AG04450 (cell line): ENCODE measurements at regions of chr9 and their contacts with region 1.

Region 1: GRCh38 chr9:84170521-84171141 is 169.9 kb downstream of the SLC28A3 start:
- DNase-seq: peak; percentile 96
- H3K4me3 ChIP-seq: no peak overlapping the region
- H3K27ac ChIP-seq: peak overlapping the region; percentile 81
- H3K27me3 ChIP-seq: no peaks in the 10 kb centered on the region
- CTCF ChIP-seq: 0 out of 2 replicates have a peak, but pooled peaks have one; percentile 3

Region 2: GRCh38 chr9:83980395-83981125 is 190.1 kb before region 1 on chr9 and contains the start of gene RMI1:
- CTCF ChIA-PET with region 1: interaction called, 9 read pairs
- POLR2A ChIA-PET with region 1: interaction called, 13 read pairs
- DNase-seq: peak; percentile 97
- H3K4me3 ChIP-seq: peak within 1 kb of the TSS; percentile 98
- H3K27ac ChIP-seq: peak within 1 kb of the TSS; percentile 98
- H3K27me3 ChIP-seq: no peaks in the 10 kb centered on the region
- CTCF ChIP-seq: peak; percentile 22
- polyA plus RNA-seq, gene RMI1: 4.0 and 4.7 TPM in 2 replicates

Region 3: DNA sequence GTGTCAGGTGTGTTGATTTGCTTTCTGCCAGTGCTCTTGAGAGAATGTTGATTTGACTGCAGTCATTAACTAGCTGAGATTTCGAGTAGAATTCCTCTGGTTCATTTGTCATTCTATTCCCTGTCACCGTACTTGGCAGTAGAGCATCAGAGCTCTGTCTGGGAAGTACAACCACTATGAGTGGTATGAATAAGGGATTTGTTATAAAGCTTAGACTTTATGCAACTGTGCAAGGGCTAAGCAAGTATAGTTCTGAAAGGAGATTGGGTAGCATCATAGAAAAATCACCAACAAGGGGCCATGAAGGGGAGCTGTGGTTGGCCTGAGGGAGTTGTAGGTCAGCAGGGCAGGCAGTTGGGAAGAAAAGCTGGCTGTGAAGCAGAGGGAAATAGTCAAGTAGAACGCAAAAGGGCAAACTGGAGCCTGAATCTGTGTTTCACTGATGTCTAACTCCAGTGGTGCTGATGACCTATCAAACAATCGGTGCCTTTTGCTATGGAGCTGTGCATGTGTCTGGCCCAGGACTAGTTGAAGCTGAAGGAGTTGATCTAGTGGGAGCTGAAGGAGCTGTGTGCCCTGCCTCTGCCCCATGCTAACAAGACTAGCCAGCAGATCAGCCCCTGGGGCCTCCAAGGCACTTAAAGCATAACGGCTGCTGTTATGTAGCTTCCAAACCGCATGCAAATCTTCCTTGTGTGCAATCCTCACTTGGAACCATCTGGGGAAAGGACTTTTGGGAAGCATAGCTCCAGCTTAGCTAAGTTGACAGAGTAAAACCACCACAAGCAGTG is 59.9 kb after region 1 on chr9:
- CTCF ChIA-PET with region 1: interaction called, 10 read pairs
- POLR2A ChIA-PET with region 1: no interaction called
- DNase-seq: no peak
- H3K4me3 ChIP-seq: no peak overlapping the region
- H3K27ac ChIP-seq: no peak overlapping the region
- H3K27me3 ChIP-seq: peaks cover 3% of the 10 kb centered on the region
- CTCF ChIP-seq: no peak